ENCODE measurements at regions of chr1 and their contacts with region 1.

Region 1: GRCh38 chr1:201511941-201512539 is 5.1 kb upstream of the CSRP1 start:
- DNase-seq: peak; percentile 69
- ATAC-seq: peak; percentile 81
- H3K4me3 Mint-ChIP-seq: 0 out of 2 replicates have a peak overlapping the region, but pooled peaks have one; percentile 29
- H3K27ac Mint-ChIP-seq: peak overlapping the region; percentile 78; the same call in 1 of the 2 replicates
- H3K4me1 Mint-ChIP-seq: peaks cover 25% of the 10 kb centered on the region
- H3K27me3 Mint-ChIP-seq: peaks cover 25% of the 10 kb centered on the region
- CTCF ChIP-seq: no peak

Region 2: GRCh38 chr1:201456499-201457309 is 55.3 kb before region 1 on chr1:
- CTCF ChIA-PET with region 1: interaction called, 16 read pairs
- POLR2A ChIA-PET with region 1: no interaction called
- DNase-seq: no peak
- ATAC-seq: peak; percentile 58
- H3K4me3 Mint-ChIP-seq: no peak overlapping the region
- H3K27ac Mint-ChIP-seq: peak overlapping the region; percentile 35; the same call in 1 of the 2 replicates
- H3K4me1 Mint-ChIP-seq: peaks cover 37% of the 10 kb centered on the region
- H3K27me3 Mint-ChIP-seq: no peaks in the 10 kb centered on the region; the same call in 1 of the 2 replicates
- CTCF ChIP-seq: no peak

Region 3: DNA sequence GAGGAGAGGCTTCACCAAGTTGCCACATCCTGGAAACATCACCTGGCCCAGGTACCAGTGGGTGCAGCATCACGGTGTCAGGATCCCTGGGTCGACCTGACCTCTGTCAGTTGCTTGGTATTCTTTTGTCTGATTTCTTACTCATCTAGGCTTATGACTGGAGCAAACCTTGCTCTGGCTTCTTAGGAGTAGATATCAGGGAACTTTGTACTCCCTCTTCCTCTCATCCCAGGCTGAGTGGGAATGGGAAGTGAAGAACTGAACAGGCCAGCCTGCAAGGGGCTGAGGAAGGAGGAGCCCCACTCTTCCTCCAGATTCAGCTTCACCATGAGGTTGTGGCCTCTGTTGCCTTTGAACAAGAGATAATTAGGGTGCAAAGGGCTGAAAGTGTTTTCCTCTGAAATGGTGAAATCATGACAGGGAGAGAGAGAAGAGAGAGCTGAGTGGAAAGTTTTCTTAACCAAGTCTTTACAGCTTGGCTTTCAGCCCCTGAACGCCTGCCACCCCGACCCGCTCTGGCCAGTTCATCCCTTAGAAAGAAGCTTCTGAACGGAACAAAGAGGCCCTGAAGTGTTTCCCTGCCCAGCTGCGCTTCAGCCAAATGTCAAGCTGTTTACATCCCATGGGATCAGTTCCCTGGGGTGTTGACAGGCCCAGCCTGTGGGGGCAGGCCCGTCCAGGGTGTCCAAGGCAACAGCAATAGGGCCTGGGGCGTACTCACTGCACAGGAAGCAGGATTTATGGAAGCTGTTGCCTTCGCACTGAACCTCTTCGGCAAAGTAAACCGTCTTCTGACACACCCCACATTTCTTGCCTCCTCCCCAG is 16.4 kb before region 1 on chr1:
- CTCF ChIA-PET with region 1: interaction called, 276 read pairs
- POLR2A ChIA-PET with region 1: no interaction called
- DNase-seq: no peak
- ATAC-seq: no peak
- H3K4me3 Mint-ChIP-seq: no peak overlapping the region
- H3K27ac Mint-ChIP-seq: no peak overlapping the region; the same call in 1 of the 2 replicates
- H3K4me1 Mint-ChIP-seq: peaks cover 19% of the 10 kb centered on the region
- H3K27me3 Mint-ChIP-seq: no peaks in the 10 kb centered on the region
- CTCF ChIP-seq: no peak

Region 4: DNA sequence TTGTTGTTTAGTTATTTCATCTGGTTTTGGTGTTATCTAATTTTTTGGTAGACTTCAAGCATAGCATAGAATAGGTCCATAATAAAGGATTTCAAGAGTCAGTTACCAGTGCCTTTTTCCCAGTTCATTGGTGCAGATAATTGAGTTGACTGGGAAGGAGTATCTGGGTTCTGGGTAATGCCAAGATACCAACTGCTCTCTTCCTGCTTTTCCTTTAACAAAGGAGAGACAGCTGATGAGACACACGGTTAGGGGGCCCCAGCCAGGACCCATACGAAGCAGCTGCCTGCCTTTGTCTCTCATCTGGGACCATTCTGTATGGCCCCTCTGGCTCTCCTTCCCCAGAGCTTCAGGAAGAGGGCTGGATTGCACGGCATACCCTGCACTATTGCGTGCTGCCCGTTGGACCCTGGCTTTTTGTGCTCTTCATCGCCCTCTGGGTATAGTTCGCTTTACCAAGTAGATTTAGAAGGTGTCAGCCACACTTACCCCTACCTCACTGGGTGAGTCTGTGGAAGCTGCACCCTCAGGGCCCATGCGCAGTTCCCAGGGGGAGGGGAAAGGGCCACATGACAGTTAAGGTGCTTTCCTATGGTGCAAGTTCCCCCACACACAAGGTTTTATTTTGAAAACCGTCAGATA is 33.9 kb after region 1 on chr1:
- CTCF ChIA-PET with region 1: interaction called, 28 read pairs
- POLR2A ChIA-PET with region 1: no interaction called
- DNase-seq: no peak
- ATAC-seq: peak; percentile 95
- H3K4me3 Mint-ChIP-seq: no peak overlapping the region
- H3K27ac Mint-ChIP-seq: 0 out of 2 replicates have a peak overlapping the region, but pooled peaks have one; percentile 85
- H3K4me1 Mint-ChIP-seq: peaks cover 20% of the 10 kb centered on the region
- H3K27me3 Mint-ChIP-seq: peaks cover 19% of the 10 kb centered on the region
- CTCF ChIP-seq: no peak

Region 5: DNA sequence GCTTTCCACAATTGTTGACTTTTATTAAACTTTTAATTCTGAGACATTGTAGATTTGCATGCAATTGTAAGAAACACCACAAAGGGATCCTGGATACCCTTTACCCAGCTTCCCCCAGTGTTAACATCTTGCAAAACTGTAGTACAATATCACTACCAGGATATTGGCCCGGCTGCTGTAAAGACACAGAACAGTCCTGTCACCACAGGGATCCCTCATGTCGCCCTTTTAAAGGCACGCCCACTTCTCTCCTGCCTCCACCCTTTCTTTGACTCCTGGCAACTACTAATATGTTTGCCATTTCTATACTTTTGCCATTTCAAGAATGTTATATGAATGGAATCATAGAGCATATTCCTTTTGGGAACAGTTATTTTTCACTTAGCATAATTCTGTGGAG is 63.9 kb after region 1 on chr1:
- CTCF ChIA-PET with region 1: no interaction called
- POLR2A ChIA-PET with region 1: no interaction called
- DNase-seq: no peak
- ATAC-seq: no peak
- H3K4me3 Mint-ChIP-seq: no peak overlapping the region
- H3K27ac Mint-ChIP-seq: no peak overlapping the region
- H3K4me1 Mint-ChIP-seq: peaks cover 8% of the 10 kb centered on the region
- H3K27me3 Mint-ChIP-seq: peaks cover 3% of the 10 kb centered on the region; the same call in 1 of the 2 replicates
- CTCF ChIP-seq: no peak

Region 6: DNA sequence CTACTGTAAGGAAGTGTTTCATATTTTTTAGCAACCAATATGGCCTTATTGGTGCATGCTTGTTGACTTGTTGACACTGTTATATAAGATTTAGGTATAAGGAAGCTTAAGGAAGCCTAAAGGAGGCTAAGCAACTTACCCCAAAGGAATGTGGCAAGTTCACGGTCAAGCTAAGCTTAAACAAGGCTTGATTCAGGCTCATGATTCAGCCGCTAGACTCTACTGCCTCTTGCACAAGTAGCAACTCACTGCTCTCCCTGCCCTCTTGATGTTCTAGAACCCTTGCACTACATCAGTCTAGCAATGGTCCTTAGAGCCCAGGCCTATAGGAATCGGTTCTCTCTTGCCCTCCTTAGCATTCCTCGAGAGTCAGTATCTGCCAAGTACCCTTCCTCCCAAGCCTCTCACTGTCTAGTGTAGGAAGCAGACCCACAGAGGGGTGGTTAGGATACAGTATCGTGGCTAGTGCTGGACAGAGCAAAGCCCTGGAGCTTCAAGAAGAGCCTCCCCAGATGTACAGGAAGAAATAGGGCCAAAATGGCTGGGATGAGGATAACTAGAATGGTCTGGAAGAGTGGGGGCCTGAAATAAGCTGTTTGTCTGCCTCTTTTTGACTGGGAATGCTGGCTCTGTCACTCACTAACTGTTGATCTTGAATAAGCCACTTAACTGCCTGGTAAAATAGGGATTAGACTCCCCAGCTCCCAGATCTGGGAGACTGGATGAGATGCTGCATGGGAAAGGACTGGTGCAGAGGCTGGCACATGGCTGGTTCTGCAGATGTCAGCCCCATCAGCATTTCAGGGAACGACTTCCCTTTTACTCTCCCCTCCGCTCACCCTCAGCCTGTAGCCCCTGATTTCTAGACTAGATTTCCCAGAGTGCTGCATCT is 149.1 kb after region 1 on chr1:
- CTCF ChIA-PET with region 1: no interaction called
- POLR2A ChIA-PET with region 1: no interaction called
- DNase-seq: no peak
- ATAC-seq: no peak
- H3K4me3 Mint-ChIP-seq: no peak overlapping the region
- H3K27ac Mint-ChIP-seq: no peak overlapping the region
- H3K4me1 Mint-ChIP-seq: peaks cover 30% of the 10 kb centered on the region
- H3K27me3 Mint-ChIP-seq: no peaks in the 10 kb centered on the region; the same call in 1 of the 2 replicates
- CTCF ChIP-seq: no peak

Region 7: DNA sequence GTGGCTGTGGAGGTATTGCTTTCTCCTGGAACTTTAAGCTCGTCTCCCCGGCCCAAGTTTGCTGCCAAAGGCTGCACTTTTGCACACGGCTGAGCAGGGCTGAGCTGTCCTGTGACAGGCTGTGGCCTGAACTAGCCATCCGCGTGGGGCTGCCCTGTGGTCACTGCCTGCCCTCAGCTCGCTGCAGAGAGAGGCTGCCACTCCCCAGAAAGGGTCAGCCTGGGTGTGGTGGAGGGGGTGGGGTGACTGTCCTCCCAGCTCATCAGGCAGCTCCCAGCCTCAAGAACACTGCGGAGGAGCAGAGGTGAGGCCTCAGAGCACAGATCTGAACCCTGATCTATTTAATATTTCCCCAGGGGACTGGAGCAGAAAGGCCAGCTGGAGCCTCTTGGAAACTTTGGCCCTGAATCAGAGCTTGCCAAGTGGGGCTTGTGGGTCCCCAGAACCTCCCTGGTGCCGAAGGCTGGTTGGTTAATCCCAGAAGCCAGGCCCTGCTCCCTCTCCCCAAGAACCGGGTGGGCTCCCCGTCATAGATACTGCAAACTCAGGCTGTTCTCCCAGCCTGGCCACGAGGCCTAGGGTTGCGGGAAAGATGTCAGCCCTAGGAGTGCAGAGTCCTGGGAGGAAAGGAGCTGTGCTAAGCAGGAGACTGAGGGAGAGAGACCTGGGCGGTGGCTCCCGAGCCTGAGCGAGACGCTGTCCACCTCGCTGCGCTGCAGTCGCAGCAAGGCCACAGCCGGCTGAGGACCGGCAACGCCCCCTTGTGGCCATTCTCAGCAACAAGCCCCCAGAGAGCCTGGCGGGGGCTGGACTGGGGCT is 191.8 kb after region 1 on chr1:
- CTCF ChIA-PET with region 1: interaction called, 15 read pairs
- POLR2A ChIA-PET with region 1: no interaction called
- DNase-seq: peak; percentile 92
- ATAC-seq: peak; percentile 88
- H3K4me3 Mint-ChIP-seq: no peak overlapping the region
- H3K27ac Mint-ChIP-seq: no peak overlapping the region
- H3K4me1 Mint-ChIP-seq: peaks cover 25% of the 10 kb centered on the region
- H3K27me3 Mint-ChIP-seq: no peaks in the 10 kb centered on the region
- CTCF ChIP-seq: peak; percentile 93

Region 8: DNA sequence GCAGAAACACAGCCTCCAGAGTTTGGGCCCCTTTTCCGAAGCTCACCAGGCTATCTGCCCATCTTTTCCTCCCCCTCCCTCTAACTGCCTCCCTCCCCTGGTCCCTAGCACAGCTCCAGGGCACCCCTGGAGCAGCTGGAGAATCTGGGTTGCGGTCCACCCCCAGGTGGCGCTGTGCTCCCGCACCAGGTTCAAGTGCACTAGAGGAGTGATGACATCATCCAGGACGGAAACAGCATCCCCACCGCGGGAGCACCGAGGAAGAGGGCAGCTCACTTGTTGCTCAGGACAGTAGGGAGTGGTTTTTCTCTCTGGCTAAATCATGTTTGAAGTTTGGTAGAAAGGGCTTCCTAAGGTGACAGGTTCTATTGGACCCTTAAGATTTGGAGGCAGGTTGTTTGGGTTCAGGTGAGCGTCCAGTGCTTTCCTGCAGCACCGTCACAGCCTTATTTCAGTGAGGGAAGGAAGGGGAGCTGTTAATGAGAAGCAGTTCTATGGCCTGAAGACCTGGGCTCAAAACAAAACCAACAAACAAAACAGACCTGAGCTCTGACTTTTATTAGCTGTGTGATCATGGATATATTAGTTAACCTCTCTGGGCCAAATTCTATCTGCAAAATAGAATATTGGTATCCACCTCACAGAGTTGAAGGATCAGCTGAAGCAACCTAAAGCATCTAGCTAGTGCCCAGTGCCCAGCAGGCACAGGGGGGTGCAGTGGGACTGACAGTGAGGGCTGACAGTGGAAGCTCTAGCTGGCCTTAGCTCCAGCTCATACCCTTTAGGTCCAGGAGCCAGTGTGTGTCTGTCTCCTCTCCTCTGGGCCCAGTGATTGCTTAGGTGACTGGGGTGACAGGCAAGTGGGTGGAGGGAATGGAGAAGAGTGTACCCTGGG is 384.1 kb after region 1 on chr1:
- CTCF ChIA-PET with region 1: interaction called, 14 read pairs
- POLR2A ChIA-PET with region 1: no interaction called
- DNase-seq: peak; percentile 97
- ATAC-seq: peak; percentile 85
- H3K4me3 Mint-ChIP-seq: peak overlapping the region; percentile 37; the same call in 1 of the 2 replicates
- H3K27ac Mint-ChIP-seq: peak overlapping the region; percentile 62
- H3K4me1 Mint-ChIP-seq: peaks cover 35% of the 10 kb centered on the region
- H3K27me3 Mint-ChIP-seq: peaks cover 4% of the 10 kb centered on the region
- CTCF ChIP-seq: peak; percentile 94